Common myeloid progenitor, CD34-positive (primary cell): ENCODE measurements at regions of chr2 and their contacts with region 1.

Region 1: GRCh38 chr2:197310271-197310985 is at the start of gene ANKRD44:
- DNase-seq: peak; percentile 86 to 93 (median 90)
- H3K4me3 ChIP-seq: peak within 1 kb of the TSS; percentile 71 to 90 (median 84)
- H3K27ac ChIP-seq: peak within 1 kb of the TSS; percentile 36 to 76
- H3K4me1 ChIP-seq: peaks cover 32 to 58% (median 49%) of the 10 kb centered on the region in 4 experiments
- H3K27me3 ChIP-seq: no peaks in the 10 kb centered on the region

Region 2: DNA sequence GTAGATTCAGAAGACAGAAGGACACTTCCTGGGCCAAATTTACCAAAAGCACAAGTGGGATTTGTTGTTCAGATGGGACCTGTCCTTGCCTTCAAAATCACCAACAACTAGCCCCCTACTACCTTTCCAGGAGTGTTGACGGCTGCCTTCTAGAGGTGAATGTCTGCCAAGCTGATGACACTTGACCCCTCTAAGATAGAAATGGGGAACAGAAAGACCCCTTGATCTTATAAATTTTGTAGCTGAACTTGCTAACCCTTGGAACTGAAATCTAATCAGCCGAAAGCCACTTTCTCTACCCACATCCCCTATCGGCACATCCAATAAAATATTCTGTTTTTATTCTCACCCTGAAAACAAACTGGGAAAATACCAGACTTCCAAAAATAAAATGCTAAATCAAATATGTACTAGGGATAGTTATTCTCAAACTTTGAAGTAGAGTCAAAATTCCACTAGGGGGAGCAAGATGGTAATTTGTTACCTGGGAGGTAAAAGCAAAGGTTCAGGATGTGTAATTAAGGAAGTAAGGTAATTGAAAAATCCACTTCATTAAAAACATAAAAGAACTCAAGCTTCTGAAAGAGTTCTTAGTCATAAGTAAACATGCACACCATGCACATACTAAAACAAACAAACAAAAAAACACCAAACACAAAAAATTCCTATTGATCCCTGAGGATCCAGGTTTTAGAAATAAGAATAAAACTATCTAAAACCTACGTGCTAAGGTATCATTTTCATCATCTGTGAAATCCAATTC is 119.1 kb before region 1 on chr2:
- CTCF ChIA-PET with region 1: interaction called, 66 read pairs
- POLR2A ChIA-PET with region 1: no interaction called
- DNase-seq: peak; percentile 74 to 80 (median 75)
- H3K4me3 ChIP-seq: no peak overlapping the region
- H3K27ac ChIP-seq: no peak overlapping the region
- H3K4me1 ChIP-seq: peaks cover 8 to 22% (median 16%) of the 10 kb centered on the region in 4 experiments
- H3K27me3 ChIP-seq: no peaks in the 10 kb centered on the region

Region 3: DNA sequence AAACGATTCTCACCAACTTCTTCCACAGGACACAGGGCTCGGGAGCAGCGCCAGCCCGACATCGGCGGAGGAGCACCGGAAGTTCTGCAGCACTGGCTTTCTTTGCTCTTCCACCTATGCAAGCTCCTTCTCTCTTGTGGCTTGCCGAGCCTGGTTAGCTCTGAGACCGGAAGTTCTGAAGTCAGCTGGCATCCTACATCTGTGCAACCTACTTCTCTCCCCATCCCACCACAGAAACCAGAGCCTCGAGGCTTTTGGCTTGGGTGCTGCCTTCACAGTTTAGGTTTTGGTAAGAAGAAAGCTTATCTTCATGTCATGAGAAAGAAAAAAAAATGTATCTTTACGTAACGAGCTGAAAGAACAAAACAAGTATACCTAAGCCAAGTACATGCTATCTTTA is 111.5 kb before region 1 on chr2:
- CTCF ChIA-PET with region 1: interaction called, 66 read pairs
- POLR2A ChIA-PET with region 1: no interaction called
- DNase-seq: peak; percentile 96 to 99 (median 99)
- H3K4me3 ChIP-seq: peak overlapping the region; percentile 14 to 73 (median 51)
- H3K27ac ChIP-seq: peak overlapping the region; percentile 40 to 71
- H3K4me1 ChIP-seq: peaks cover 39 to 70% (median 59%) of the 10 kb centered on the region in 4 experiments
- H3K27me3 ChIP-seq: no peaks in the 10 kb centered on the region

Region 4: DNA sequence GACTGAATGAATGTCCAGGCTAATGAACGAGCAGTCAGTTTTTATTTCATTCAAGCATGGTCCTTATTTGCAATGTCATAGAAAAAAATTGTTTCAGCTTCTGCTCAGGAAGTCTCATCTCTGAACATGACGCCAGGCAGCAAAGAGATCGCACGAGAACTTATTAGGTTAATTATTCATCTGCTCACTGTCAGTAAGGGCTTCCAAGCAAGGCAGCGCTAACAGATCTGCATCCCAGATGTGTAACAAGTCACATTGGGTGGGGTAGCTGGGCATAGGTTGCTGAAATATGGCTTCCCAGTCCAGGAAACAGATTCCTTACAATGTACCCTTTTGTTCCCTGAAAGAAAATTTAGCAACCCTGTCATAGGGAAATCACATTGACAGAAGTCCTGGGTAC is 63.3 kb before region 1 on chr2:
- CTCF ChIA-PET with region 1: interaction called, 10 read pairs
- POLR2A ChIA-PET with region 1: no interaction called
- DNase-seq: peak in 1 of 3 donors; percentile 43
- H3K4me3 ChIP-seq: no peak overlapping the region
- H3K27ac ChIP-seq: no peak overlapping the region
- H3K4me1 ChIP-seq: peaks cover 14 to 29% (median 23%) of the 10 kb centered on the region in 4 experiments
- H3K27me3 ChIP-seq: no peaks in the 10 kb centered on the region

Region 5: DNA sequence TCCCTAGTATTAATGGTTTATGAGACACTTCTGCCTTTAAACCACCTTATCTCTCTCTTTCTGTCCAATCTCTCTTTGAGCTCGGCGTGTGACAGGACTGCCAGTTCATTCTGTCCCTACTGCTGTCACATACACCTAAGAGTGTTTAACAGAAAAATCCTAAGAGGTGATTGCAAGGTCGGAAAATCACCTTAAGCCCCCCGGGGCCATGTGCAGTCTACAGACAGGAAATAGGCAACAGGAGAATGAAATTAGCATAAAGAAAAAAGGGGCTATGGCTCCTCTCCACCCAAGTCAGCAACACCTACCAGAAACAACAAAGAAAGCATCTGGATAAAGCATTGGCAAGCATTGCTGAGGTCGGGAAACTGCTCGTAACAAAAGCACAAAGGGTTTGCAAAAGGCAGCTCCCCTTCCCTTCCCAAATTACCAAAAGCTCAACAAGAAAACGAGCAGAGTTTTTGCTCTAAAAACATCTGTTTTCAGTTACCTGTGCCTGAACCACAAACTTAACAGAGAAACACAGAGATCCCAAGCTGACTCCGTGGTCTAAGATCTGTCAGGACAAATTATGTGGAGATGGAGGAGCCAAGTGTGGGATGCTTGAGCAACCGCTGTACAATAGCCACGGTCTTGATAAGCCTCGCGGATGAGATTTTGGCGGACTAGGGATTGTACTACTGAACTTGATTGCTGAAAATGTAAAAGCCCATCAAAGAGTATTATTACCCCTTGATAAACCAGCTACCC is 30.3 kb before region 1 on chr2:
- CTCF ChIA-PET with region 1: interaction called, 12 read pairs
- POLR2A ChIA-PET with region 1: no interaction called
- DNase-seq: no peak
- H3K4me3 ChIP-seq: no peak overlapping the region
- H3K27ac ChIP-seq: no peak overlapping the region
- H3K4me1 ChIP-seq: peaks cover 4 to 51% (median 29%) of the 10 kb centered on the region in 4 experiments
- H3K27me3 ChIP-seq: no peaks in the 10 kb centered on the region

Region 6: GRCh38 chr2:197327472-197328098 is 17.2 kb after region 1 on chr2:
- CTCF ChIA-PET with region 1: interaction called, 11 read pairs
- POLR2A ChIA-PET with region 1: no interaction called
- DNase-seq: peak in 2 of 3 donors; percentile 46 to 58
- H3K4me3 ChIP-seq: peak overlapping the region in 1 of 7 experiments; percentile 0
- H3K27ac ChIP-seq: no peak overlapping the region
- H3K4me1 ChIP-seq: peaks cover 17 to 37% (median 30%) of the 10 kb centered on the region in 4 experiments
- H3K27me3 ChIP-seq: no peaks in the 10 kb centered on the region

Region 7: GRCh38 chr2:197345846-197346370 is 35.5 kb after region 1 on chr2:
- CTCF ChIA-PET with region 1: no interaction called
- POLR2A ChIA-PET with region 1: no interaction called
- DNase-seq: no peak
- H3K4me3 ChIP-seq: no peak overlapping the region
- H3K27ac ChIP-seq: no peak overlapping the region
- H3K4me1 ChIP-seq: no peaks in the 10 kb centered on the region
- H3K27me3 ChIP-seq: no peaks in the 10 kb centered on the region

Region 8: DNA sequence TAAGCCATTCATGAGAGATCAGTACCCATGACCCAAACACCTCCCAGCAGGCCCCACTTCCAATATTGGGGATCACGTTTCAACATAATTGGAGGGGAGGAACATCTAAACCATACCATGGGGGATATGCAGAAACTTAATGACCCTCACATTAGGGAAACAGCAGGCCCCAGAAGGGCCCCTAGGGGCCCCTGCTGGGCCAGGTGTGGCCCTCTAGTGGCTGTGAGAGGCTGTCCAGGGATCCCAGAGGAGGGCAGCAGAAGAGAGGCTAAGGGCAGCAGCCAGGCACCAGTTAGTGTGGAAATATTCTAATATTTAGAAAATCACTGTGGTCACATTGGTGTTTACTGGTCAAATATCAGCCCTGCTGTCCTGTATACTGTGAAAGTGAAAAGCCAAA is 49.4 kb after region 1 on chr2:
- CTCF ChIA-PET with region 1: interaction called, 10 read pairs
- POLR2A ChIA-PET with region 1: no interaction called
- DNase-seq: no peak
- H3K4me3 ChIP-seq: no peak overlapping the region
- H3K27ac ChIP-seq: no peak overlapping the region
- H3K4me1 ChIP-seq: no peaks in the 10 kb centered on the region
- H3K27me3 ChIP-seq: no peaks in the 10 kb centered on the region